ENCODE measurements at regions of chr15 and their contacts with region 1.

Region 1: DNA sequence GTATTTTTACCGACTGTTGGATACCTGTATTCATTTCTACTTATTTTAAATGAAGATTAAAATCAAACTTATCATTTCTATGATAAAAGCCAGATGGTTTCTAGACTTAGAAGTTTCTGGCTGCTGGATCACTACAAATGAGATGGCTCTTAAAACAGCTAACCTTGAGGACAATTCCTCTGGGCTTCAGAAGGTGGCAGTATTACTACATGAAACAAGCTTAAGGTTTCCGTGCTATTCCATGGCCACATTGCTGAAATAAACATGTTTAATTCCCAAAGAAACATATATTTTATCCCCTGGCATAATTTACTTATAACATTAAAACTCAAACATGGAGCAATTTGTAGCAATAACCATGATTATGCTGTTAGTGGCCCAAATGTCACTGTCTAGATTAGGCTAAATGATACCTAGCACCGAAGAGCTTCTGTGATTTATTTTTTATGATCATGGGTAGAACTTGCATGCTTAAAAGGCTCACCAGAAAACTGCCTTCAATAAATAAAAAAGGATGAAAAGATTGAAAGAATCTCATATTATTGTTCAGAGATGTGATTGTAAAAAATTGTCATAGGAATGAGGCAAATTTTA is 204.0 kb upstream of the NANOGP8 start:
- DNase-seq: no peak
- ATAC-seq: peak; percentile 87
- H3K4me3 Mint-ChIP-seq: no peak overlapping the region
- H3K27ac Mint-ChIP-seq: no peak overlapping the region
- H3K4me1 Mint-ChIP-seq: peaks cover 43% of the 10 kb centered on the region
- H3K27me3 Mint-ChIP-seq: no peaks in the 10 kb centered on the region
- CTCF ChIP-seq: peak; percentile 57

Region 2: GRCh38 chr15:35181538-35181937 is 107.6 kb before region 1 on chr15:
- CTCF ChIA-PET with region 1: interaction called, 14 read pairs
- POLR2A ChIA-PET with region 1: no interaction called
- DNase-seq: no peak
- ATAC-seq: no peak
- H3K4me3 Mint-ChIP-seq: no peak overlapping the region
- H3K27ac Mint-ChIP-seq: no peak overlapping the region; the same call in 1 of the 2 replicates
- H3K4me1 Mint-ChIP-seq: peaks cover 63% of the 10 kb centered on the region
- H3K27me3 Mint-ChIP-seq: peaks cover 11% of the 10 kb centered on the region
- CTCF ChIP-seq: no peak

Region 3: GRCh38 chr15:35437157-35437556 is 148.0 kb after region 1 on chr15:
- CTCF ChIA-PET with region 1: interaction called, 36 read pairs
- POLR2A ChIA-PET with region 1: no interaction called
- DNase-seq: no peak
- ATAC-seq: peak; percentile 77
- H3K4me3 Mint-ChIP-seq: no peak overlapping the region
- H3K27ac Mint-ChIP-seq: peak overlapping the region; percentile 66; the same call in 1 of the 2 replicates
- H3K4me1 Mint-ChIP-seq: peaks cover 32% of the 10 kb centered on the region
- H3K27me3 Mint-ChIP-seq: no peaks in the 10 kb centered on the region
- CTCF ChIP-seq: no peak

Region 4: DNA sequence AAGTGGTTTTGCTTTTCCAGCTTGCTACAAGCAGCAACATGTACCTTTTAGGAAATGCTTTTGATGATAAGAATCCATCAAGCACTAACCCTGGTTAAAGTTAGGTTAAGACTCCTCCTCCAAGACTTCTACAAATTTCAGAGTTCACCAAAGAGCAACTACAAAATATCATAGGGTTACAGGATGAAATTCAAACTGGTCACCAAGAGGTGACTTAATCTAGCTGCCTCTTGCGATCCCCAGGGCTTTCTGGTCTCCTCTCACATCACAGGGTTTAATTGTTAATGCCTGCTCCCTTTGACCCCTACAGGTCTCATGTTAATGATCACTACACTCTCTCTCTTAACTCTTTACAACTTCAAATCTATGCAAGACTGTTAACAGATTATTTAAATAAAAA is 190.3 kb after region 1 on chr15:
- CTCF ChIA-PET with region 1: interaction called, 11 read pairs
- POLR2A ChIA-PET with region 1: no interaction called
- DNase-seq: no peak
- ATAC-seq: peak; percentile 80
- H3K4me3 Mint-ChIP-seq: no peak overlapping the region
- H3K27ac Mint-ChIP-seq: no peak overlapping the region; the same call in 1 of the 2 replicates
- H3K4me1 Mint-ChIP-seq: peaks cover 19% of the 10 kb centered on the region
- H3K27me3 Mint-ChIP-seq: no peaks in the 10 kb centered on the region
- CTCF ChIP-seq: no peak